Activated CD4-positive, alpha-beta T cell treated with anti-CD3 and anti-CD28 coated beads, Interleukin-2, amount 10 ng/mL, durations not matched to agents 24 days and 14 days (primary cell): ENCODE measurements at regions of chr3 and their contacts with region 1.

Region 1: GRCh38 chr3:15500107-15500724 is 21.3 kb downstream of the COLQ start:
- DNase-seq: no peak
- H3K4me3 Mint-ChIP-seq: peak overlapping the region; percentile 3
- H3K27ac Mint-ChIP-seq: peak overlapping the region; percentile 17
- H3K4me1 Mint-ChIP-seq: peaks cover 40% of the 10 kb centered on the region
- H3K27me3 Mint-ChIP-seq: no peaks in the 10 kb centered on the region

Region 2: DNA sequence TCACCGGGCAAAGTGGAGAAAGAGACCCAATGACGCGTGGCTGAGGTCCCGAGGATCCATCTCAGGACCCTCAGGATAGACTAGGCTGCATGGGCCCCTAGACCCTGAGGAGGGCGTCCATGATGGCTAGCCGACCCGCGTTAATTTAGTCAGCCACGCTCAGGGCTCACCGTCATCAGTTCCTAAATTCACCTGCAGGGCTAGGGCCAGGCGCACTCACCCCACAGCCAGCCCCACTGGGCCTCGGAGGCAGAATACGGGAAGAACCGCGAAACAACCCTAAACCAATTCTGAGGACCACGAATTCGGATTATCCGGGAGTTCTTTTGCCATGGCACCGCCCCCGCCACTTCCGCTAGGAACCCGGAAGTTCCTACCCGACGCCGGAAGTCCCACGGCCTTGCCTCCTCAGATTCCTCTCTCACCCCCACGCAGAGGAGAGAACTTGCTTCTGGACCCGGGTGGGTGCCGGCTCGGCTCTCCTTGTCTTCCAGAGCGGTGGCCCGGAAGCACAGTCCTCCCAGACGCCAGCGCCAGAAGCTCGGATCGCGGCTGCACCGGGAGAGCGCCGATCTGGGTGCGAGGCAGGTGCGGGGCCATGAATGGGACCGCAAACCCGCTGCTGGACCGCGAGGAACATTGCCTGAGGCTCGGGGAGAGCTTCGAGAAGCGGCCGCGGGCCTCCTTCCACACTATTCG is 72.9 kb before region 1 on chr3 and contains the starts of genes EAF1 and METTL6:
- intact Hi-C with region 1: loop called (anchors 2 kb)
- DNase-seq: peak; percentile 96
- H3K4me3 Mint-ChIP-seq: peak within 1 kb of the TSS; percentile 96
- H3K27ac Mint-ChIP-seq: peak within 1 kb of the TSS; percentile 95
- H3K4me1 Mint-ChIP-seq: peaks cover 47% of the 10 kb centered on the region
- H3K27me3 Mint-ChIP-seq: no peaks in the 10 kb centered on the region
- total RNA-seq, gene EAF1: 24.2 and 25.7 TPM in 2 replicates
- total RNA-seq, gene METTL6: 15.2 and 17.4 TPM in 2 replicates

Region 3: GRCh38 chr3:16388850-16389441 is 888.7 kb after region 1 on chr3:
- intact Hi-C with region 1: no loop called
- DNase-seq: no peak
- H3K4me3 Mint-ChIP-seq: no peak overlapping the region
- H3K27ac Mint-ChIP-seq: no peak overlapping the region
- H3K4me1 Mint-ChIP-seq: peaks cover 33% of the 10 kb centered on the region
- H3K27me3 Mint-ChIP-seq: no peaks in the 10 kb centered on the region